SK-N-SH (cell line): ENCODE measurements at regions of chr4 and their contacts with region 1.

Region 1: DNA sequence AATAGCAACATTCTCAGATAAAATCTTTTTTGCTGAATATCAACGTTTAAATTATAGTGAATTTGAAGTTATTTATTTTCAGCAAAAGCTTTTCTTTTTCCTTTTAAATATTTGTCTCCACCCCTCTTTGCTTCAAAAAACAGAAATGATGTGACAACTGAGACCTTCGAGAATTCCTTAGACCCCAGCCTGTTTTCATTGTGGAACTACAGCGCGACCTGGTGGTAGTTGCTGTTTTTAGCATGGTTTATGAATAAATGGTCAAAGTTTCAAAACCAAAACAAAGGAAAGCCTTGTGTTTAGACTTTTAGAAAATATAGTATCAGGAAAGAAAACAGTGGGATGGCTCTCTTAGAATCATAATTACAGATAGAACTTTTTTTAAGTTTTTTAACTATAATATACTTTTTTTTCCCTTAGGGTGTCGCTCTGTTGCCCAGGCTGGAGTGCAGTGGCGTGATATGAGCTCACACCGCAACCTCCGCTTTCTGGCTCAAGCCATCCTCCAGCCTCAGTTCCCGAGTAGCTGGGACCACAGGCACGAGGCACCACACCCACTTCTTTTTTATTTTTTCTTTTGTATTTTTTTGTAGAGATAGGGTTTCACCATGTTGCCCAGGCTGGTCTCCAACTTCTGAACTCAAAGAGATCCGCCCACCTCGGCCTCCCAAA is 26.8 kb upstream of the TMEM184C start:
- DNase-seq: peak; percentile 67
- H3K4me3 ChIP-seq: no peak overlapping the region
- H3K27ac ChIP-seq: no peak overlapping the region
- H3K4me1 ChIP-seq: peaks cover 7 to 12% of the 10 kb centered on the region in 2 experiments; a peak in 3 of 4 replicates
- H3K27me3 ChIP-seq: no peaks in the 10 kb centered on the region
- CTCF ChIP-seq: peak; percentile 92
- EP300 ChIP-seq: no peak
- RAD21 ChIP-seq: peak; percentile 96

Region 2: GRCh38 chr4:147111033-147111367 is 479.4 kb before region 1 on chr4:
- CTCF ChIA-PET with region 1: interaction called, 24 read pairs
- POLR2A ChIA-PET with region 1: no interaction called
- DNase-seq: peak; percentile 29
- H3K4me3 ChIP-seq: no peak overlapping the region
- H3K27ac ChIP-seq: no peak overlapping the region
- H3K4me1 ChIP-seq: no peaks in the 10 kb centered on the region
- H3K27me3 ChIP-seq: no peaks in the 10 kb centered on the region
- CTCF ChIP-seq: peak; percentile 43
- EP300 ChIP-seq: no peak
- RAD21 ChIP-seq: peak; percentile 71

Region 3: GRCh38 chr4:147160908-147161513 is 429.4 kb before region 1 on chr4:
- CTCF ChIA-PET with region 1: interaction called, 47 read pairs
- POLR2A ChIA-PET with region 1: no interaction called
- DNase-seq: peak; percentile 77
- H3K4me3 ChIP-seq: peak overlapping the region in 1 of 2 experiments; percentile 30; a peak in 1 of 4 replicates
- H3K27ac ChIP-seq: no peak overlapping the region
- H3K4me1 ChIP-seq: peaks cover 3 to 18% of the 10 kb centered on the region in 2 experiments; a peak in 3 of 4 replicates
- H3K27me3 ChIP-seq: no peaks in the 10 kb centered on the region
- CTCF ChIP-seq: peak; percentile 85
- EP300 ChIP-seq: no peak
- RAD21 ChIP-seq: peak; percentile 92

Region 4: DNA sequence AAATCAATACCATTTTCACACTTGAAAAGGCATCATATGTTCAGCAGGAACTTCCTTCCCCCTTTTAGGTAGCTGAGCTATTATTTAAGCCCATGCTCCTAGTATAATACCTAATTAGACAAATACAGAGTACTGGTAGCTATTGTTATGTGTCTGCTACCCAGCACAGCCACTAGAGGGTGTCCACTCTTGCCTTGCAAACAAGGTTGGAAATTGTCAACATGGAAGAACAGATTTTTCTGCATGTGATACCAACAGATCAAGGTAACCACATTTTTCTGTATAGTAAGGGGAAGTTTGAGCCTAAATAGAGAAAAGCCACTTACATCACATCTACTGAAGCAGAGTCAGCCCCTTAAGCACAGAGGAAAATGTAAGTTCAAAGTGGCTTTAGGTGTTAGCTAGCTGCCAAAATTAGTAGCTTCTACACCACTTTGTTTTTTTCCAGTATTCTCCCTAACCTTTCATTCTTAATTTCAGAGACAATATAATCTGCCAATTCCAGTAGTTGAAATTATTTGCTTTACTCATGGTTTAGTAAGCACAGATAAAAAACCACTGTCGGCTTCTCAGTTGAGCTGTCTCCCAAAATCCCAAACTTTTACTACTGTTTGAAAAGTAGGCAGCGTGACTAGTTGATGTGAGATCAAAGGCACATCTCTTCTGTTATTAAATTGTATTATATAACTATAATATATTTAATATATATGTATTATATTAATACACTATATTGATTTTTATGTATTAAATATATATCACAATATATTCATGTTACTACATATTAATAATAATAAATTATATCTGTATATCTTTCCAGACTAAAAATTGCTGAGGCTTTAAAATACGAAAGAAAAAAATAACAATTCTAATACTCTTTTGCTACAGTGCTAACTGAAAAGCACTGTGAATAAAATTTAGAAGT is 71.3 kb before region 1 on chr4:
- CTCF ChIA-PET with region 1: interaction called, 26 read pairs
- POLR2A ChIA-PET with region 1: no interaction called
- DNase-seq: peak; percentile 44
- H3K4me3 ChIP-seq: no peak overlapping the region; a peak in 1 of 4 replicates
- H3K27ac ChIP-seq: peak overlapping the region in 1 of 2 experiments; percentile 57; a peak in 1 of 4 replicates
- H3K4me1 ChIP-seq: peaks cover 3 to 10% of the 10 kb centered on the region in 2 experiments; a peak in 2 of 4 replicates
- H3K27me3 ChIP-seq: no peaks in the 10 kb centered on the region
- CTCF ChIP-seq: peak; percentile 93
- EP300 ChIP-seq: no peak
- RAD21 ChIP-seq: peak; percentile 83